ENCODE measurements at regions of chr6 and their contacts with region 1.

Region 1: GRCh38 chr6:158819213-158819909 is at the start of gene EZR:
- DNase-seq: peak; percentile 81
- ATAC-seq: peak; percentile 70
- H3K4me3 ChIP-seq: peak within 1 kb of the TSS; percentile 77
- H3K27ac ChIP-seq: peak within 1 kb of the TSS; percentile 70
- H3K4me1 ChIP-seq: peaks cover 22% of the 10 kb centered on the region
- H3K27me3 ChIP-seq: no peaks in the 10 kb centered on the region
- CTCF ChIP-seq: no peak
- total RNA-seq, gene EZR: 182 and 200 TPM in 2 replicates

Region 2: DNA sequence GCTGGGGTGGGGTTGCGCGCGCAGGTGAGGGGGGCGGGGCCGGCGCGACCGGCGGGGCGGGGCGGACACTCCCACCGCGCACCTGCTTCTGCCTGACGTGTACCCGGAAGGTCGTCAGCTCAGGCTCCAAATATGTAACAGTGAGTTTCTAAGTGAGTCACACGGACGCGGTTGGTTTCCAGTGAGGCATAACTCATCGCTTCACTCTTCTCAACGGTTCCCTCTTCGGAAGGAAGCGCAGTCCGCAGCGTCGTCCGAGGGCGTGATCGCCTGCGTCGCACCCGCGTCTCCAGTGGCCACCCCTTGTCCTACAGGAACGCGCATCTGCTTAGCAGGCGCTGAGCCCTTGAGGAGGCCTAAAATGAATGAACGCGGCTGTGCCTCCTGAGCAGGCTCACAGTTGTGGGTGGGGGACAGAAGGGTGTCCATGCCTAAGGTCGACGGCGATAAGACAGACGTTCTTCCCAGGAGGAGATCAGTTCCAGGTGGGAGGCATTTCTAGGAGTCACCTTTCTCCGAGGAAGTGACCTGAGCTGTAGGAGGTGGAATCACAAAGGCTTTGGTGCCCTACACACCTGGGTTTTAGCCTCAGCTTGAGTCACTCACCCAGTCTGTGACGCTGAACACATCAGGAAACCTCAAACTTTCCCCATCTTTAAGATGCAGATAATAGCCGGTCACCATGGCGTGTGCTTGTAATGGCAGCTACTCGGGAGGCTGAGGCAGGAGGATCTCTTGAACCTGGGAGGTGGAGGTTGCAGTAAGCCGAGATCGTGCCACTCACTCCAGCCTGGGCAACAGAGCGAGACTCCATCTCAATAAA is 50.7 kb after region 1 on chr6:
- CTCF ChIA-PET with region 1: no interaction called
- POLR2A ChIA-PET with region 1: interaction called, 3 read pairs
- intact Hi-C with region 1: loop called (anchors 2 kb)
- DNase-seq: peak; percentile 97
- ATAC-seq: peak; percentile 92
- H3K4me3 ChIP-seq: peak overlapping the region; percentile 26; the same call in 1 of the 2 replicates
- H3K27ac ChIP-seq: peak overlapping the region; percentile 93
- H3K4me1 ChIP-seq: peaks cover 19% of the 10 kb centered on the region
- H3K27me3 ChIP-seq: no peaks in the 10 kb centered on the region
- CTCF ChIP-seq: 0 out of 2 replicates have a peak, but pooled peaks have one; percentile 14

Region 3: DNA sequence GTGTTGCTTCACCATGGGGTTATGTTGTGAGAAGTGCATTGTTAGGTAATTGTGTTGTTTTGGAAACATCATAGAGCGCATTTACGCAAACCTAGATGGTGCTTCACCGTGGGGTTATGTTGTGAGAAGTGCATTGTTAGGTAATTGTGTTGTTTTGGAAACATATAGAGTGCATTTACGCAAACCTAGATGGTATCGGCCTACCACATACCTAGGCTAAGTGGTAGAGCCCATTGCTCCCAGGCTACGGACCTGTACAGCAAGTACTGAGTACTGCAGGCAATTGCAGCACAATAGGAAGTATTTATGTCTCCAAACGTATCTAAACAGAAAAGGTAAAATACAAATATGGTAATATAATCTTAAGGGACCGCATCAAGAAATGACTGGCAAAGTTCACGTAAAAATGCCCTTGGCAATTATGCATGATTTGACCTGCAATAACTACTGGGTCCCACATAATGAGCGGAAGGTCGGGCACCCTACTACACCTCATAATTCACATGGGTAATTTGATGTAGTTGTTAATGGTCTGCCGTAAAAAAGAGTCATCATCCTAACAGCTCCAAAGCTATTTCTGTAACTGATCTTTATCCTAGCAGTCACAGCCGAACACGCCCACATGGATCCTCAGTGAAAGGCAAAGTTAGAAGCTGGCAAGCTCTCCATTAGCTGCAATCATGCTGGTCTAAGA is 104.6 kb after region 1 on chr6:
- CTCF ChIA-PET with region 1: no interaction called
- POLR2A ChIA-PET with region 1: interaction called, 11 read pairs
- intact Hi-C with region 1: no loop called
- DNase-seq: no peak
- ATAC-seq: no peak
- H3K4me3 ChIP-seq: no peak overlapping the region
- H3K27ac ChIP-seq: no peak overlapping the region
- H3K4me1 ChIP-seq: peaks cover 31% of the 10 kb centered on the region
- H3K27me3 ChIP-seq: no peaks in the 10 kb centered on the region
- CTCF ChIP-seq: no peak

Region 4: GRCh38 chr6:158938811-158939254 is 119.5 kb after region 1 on chr6:
- CTCF ChIA-PET with region 1: no interaction called
- POLR2A ChIA-PET with region 1: interaction called, 11 read pairs
- intact Hi-C with region 1: no loop called
- DNase-seq: no peak
- ATAC-seq: no peak
- H3K4me3 ChIP-seq: no peak overlapping the region
- H3K27ac ChIP-seq: no peak overlapping the region
- H3K4me1 ChIP-seq: no peaks in the 10 kb centered on the region
- H3K27me3 ChIP-seq: no peaks in the 10 kb centered on the region
- CTCF ChIP-seq: no peak

Measured in PC-3 (cell line).